Motor neuron (in vitro differentiated cells): ENCODE measurements at regions of chr19 and their contacts with region 1.

Region 1: DNA sequence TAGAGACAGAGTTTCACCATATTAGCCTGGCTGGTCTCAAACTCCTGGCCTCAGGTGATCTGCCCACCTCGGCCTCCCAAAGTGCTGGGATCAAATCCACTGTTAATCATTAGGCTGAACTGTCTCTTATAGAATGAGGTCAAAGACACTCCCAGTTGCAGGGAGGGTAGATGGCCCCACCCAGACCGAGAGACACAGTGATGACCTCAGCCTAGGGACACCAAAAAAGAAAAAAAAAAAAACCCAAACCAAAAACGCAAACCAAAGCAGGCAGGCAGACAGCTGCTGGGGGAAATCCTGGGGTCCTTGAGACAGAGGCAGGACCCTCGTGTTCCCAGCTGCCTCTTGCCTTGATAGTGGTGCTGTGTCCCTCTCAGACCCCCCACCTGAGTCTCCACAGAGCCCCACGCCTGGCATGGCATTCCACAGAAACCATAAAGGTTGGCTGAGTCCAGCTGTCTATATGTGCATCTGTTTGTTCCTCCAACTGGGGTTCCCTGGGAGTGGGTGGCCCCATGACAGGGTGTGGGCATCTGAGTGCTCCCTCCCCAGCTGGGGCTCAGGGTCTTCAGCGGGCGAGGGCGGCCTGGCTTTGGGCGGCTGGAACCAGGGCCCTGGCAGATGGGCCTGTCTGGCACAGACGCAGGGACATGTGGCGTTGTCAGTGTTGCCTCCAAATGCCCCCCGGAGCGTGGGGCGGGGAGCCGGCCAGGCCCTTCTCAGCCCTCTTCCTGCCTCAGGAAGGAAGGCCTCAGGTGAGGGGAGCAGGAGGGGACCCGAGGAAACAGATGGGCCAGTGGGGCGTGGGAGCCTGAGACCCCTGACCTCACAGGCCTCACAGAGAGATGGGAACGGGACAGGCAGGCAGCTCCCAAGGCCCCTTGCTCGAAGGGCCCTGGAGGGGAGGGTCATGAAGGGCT is 5.2 kb downstream of the DAND5 start:
- ATAC-seq: peak in 6 of 8 experiments; percentile 7 to 85 (median 14)
- H3K4me3 ChIP-seq: no peak overlapping the region
- H3K27ac ChIP-seq: no peak overlapping the region
- H3K4me1 ChIP-seq: no peaks in the 10 kb centered on the region

Region 2: DNA sequence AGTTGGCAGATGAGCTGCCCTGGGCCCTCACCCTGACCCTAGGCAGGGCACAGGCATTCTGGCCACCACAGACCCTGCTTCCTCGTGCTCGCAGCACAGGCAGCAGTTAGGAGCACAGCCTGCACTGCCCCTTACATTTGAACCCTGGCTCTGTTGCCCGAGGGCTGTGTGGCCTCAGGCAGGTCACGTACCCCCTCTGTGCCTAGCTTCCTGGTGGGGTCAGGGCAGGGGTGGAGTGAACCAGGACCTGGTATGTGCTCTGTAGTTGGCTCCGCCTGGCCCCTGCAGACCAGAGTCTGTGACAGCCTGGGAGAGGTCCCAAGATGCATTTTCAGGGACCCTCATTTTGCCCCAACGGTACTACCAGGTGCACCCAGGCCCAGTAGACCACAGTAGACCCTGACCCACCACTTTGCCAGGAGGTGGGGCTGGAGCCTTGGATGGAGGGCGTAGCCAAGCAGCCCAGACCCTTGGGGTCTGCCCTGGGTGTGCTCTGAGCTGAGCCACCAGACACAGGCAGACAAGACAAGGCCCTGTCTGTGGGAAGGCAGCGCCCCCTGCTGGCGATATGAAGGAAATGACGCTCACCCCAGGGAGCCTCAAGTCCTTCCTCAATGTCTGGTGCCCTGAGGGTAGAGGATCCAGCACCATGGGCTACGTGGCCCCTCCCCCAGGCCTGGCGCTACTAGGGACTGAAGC is 119.0 kb after region 1 on chr19:
- in situ Hi-C with region 1: loop called in 4 of 9 experiments (anchors 10 to 25 kb)
- ATAC-seq: peak; percentile 58 to 87 (median 74)
- H3K4me3 ChIP-seq: no peak overlapping the region
- H3K27ac ChIP-seq: no peak overlapping the region
- H3K4me1 ChIP-seq: peaks cover 22 to 56% of the 10 kb centered on the region in 2 donors

Region 3: GRCh38 chr19:13104848-13105711 is 130.5 kb after region 1 on chr19:
- in situ Hi-C with region 1: no loop called
- ATAC-seq: peak in 1 of 8 experiments; percentile 2
- H3K4me3 ChIP-seq: no peak overlapping the region
- H3K27ac ChIP-seq: no peak overlapping the region
- H3K4me1 ChIP-seq: peaks cover 0 to 5% of the 10 kb centered on the region in 2 donors